SK-N-SH (cell line): ENCODE measurements at regions of chr10 and their contacts with region 1.

Region 1: DNA sequence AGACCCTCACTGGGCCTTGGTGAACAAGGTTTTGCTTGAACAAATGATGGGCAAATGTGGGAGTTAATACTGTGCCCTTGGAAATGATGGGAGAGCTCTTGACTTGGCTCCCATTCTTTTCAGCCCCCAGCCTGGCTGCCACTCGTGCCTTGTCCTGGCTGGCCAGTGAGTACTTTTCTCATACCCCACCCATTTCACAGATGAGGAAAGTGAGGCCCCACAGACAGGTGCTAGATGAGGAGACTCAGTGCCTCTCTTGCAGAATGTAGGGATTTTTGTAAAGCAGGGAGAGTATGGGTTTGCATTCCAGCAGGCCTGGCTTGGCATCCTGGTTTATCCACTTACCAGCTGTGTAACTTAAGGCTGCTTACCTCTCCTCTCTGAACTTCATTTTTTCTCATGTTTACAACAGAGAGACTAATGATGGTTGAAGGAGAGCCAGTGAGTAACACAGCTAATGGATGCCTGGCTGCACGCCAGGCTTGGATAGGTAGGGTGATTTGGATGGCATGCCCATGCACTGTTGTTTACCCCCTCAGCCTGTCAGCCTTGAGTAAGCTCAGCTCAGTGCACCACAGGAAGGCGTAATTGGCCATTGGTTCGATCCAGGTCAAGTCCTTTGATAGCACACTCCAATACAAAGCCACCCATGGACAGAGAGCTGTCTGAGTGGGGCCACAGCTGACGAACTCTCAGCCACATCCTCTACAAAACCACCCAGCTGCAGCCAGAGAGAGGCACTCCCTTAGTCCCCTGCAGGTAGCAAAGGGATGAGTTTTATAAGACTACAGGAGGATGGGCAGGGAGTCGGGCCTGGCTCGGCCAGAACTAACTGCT is 436.8 kb downstream of the RPS24 start:
- DNase-seq: peak; percentile 62
- H3K4me3 ChIP-seq: no peak overlapping the region
- H3K27ac ChIP-seq: peak overlapping the region in 1 of 2 experiments; percentile 100; a peak in 2 of 4 replicates
- H3K4me1 ChIP-seq: peaks cover 0 to 54% of the 10 kb centered on the region in 2 experiments; a peak in 2 of 4 replicates
- H3K27me3 ChIP-seq: no peaks in the 10 kb centered on the region
- CTCF ChIP-seq: no peak
- EP300 ChIP-seq: peak; percentile 33 to 52; a peak in 2 of 4 replicates
- RAD21 ChIP-seq: 0 out of 2 replicates have a peak, but pooled peaks have one; percentile 7

Region 2: DNA sequence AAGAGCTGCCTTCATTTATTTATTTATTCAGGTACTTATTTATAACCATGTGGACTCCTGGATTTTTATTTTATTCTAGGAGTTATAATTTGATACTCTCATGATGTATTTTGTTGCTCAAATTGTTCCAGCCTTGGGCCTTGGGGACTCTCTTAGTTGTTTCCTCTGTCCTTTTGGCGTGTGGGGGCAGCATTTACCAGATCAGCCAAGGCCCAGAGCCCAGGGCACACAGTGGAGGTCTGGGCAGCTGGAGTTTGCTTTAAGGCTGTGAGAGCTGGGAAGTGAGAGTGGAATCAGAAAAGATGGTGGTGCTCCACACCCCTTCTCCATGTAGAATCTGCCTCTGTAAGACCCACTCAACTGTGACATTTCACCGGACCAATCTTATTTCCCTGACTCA is 37.9 kb before region 1 on chr10:
- CTCF ChIA-PET with region 1: interaction called, 5 read pairs
- POLR2A ChIA-PET with region 1: interaction called, 25 read pairs
- DNase-seq: no peak
- H3K4me3 ChIP-seq: no peak overlapping the region
- H3K27ac ChIP-seq: peak overlapping the region in 1 of 2 experiments; percentile 99; a peak in 2 of 4 replicates
- H3K4me1 ChIP-seq: peaks cover 0 to 54% of the 10 kb centered on the region in 2 experiments; a peak in 2 of 4 replicates
- H3K27me3 ChIP-seq: no peaks in the 10 kb centered on the region
- CTCF ChIP-seq: no peak; the same call in 1 of the 2 replicates
- EP300 ChIP-seq: no peak
- RAD21 ChIP-seq: peak; percentile 63

Region 3: DNA sequence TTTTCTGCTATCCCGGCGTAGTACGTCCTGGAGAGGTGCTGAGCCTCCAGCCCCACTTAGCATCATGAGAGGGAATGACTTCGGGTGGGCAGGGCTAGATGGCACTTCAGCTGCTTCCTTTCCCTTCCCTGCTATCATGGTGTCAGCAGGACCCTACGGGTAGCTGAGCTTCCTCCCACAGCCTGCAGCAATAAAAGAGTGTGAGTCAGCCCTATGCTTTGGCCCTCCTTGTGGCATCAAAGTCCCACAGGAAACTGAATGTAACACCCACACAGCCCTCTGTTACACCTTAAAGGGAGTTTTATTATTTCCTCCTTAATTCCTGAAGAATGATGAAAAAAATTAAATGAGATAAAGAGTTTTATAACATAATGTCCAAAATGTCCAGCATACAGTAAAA is 21.3 kb after region 1 on chr10:
- CTCF ChIA-PET with region 1: no interaction called
- POLR2A ChIA-PET with region 1: no interaction called
- DNase-seq: no peak
- H3K4me3 ChIP-seq: no peak overlapping the region
- H3K27ac ChIP-seq: no peak overlapping the region
- H3K4me1 ChIP-seq: no peaks in the 10 kb centered on the region; a peak in 1 of 4 replicates
- H3K27me3 ChIP-seq: no peaks in the 10 kb centered on the region
- CTCF ChIP-seq: no peak
- EP300 ChIP-seq: no peak
- RAD21 ChIP-seq: no peak

Region 4: DNA sequence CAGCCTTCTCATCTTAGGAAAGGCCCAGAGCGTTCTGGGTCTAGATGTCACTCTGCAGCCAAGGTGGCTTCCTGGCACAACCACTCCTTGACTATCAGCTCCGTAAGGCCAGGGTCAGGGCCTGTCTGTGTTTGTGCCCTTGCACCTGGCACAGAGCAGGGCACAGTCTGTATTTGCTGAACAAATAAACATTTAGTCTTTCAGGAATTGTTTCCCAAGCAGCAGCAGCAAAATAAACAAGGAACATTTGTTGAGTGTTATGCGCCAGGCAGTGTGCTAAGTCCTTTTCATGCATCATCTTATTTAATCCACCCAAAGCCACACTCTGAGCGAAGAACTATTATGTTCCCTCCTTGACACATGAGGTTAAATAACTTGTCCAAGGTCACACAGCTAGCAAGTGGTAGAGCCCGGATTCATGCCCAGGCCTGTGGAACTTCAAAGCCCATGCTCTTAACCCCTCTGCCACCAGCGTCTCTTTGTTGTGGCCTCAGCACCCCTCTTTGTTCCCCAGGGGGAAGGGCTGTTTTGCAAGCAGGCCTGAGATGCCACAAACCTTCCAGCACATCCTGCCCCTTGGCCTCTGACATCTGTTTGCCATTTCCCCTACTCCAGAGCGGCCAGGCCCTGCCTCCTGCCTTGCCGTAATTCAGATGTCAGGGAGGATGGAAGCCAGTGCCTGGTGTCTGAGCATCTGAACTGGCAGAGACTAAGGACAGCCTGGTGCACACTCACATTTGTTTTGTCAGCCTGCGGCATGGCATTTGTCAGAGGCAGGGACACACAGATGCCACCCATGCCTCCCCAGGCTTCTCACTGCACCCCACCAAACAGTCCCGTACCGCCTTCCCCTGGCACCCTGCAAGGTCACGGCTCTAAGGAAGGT is 272.5 kb after region 1 on chr10:
- CTCF ChIA-PET with region 1: interaction called, 11 read pairs
- POLR2A ChIA-PET with region 1: interaction called, 3 read pairs
- DNase-seq: peak; percentile 84
- H3K4me3 ChIP-seq: no peak overlapping the region
- H3K27ac ChIP-seq: peak overlapping the region in 1 of 2 experiments; percentile 99; a peak in 2 of 4 replicates
- H3K4me1 ChIP-seq: peaks cover 0 to 85% of the 10 kb centered on the region in 2 experiments; a peak in 2 of 4 replicates
- H3K27me3 ChIP-seq: no peaks in the 10 kb centered on the region
- CTCF ChIP-seq: no peak
- EP300 ChIP-seq: peak; percentile 21 to 99; a peak in 3 of 4 replicates
- RAD21 ChIP-seq: peak; percentile 51